B cell (primary cell): ENCODE measurements at regions of chr5 and their contacts with region 1.

Region 1: DNA sequence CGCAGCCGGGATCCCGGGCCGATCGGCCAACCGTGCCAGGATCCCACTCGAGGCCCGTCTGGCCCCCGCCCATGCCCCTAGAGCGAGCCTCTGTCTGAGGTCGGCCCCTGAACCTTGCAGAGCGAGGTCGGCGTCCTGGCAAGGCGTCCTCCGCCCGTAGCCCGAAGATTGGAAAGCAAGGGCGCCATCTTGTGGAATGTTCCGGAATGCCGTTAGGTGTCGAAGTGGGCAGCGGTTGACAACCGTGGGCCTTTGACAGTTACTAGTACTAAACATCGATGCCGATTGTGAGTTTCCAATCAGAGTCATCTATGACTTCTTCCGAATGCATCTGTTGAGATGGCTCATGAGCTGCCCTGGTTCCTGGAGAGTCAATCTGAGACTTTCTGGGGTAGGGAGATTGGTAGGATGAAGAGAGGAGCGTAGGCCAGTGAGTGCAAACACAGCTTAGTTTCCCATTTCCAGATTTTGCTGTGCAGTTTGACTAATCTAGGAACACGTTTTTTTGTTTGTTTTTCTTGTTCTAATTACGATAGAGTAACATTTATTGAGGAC is 923 bp upstream of the PLK2 start:
- DNase-seq: peak; percentile 93
- ATAC-seq: peak; percentile 60
- H3K4me3 ChIP-seq: peak overlapping the region in 4 of 5 experiments; percentile 67 to 88 (median 78)
- H3K4me3 Mint-ChIP-seq: peak overlapping the region; percentile 87
- H3K27ac ChIP-seq: peak overlapping the region; percentile 87 to 93
- H3K27ac Mint-ChIP-seq: peak overlapping the region; percentile 93
- H3K4me1 ChIP-seq: peaks cover 10 to 13% of the 10 kb centered on the region in 2 donors
- H3K4me1 Mint-ChIP-seq: peaks cover 13% of the 10 kb centered on the region
- H3K27me3 ChIP-seq: peaks cover 0 to 7% (median 3%) of the 10 kb centered on the region in 4 experiments
- H3K27me3 Mint-ChIP-seq: peaks cover 3% of the 10 kb centered on the region
- CTCF ChIP-seq: peak; percentile 83

Region 2: GRCh38 chr5:56951946-56952691 is 1508.7 kb before region 1 on chr5 and contains the start of gene MIER3:
- CTCF ChIA-PET with region 1: no interaction called
- POLR2A ChIA-PET with region 1: no interaction called
- intact Hi-C with region 1: loop called (anchors 5 kb)
- DNase-seq: peak; percentile 84
- ATAC-seq: peak; percentile 91
- H3K4me3 ChIP-seq: peak within 1 kb of the TSS; percentile 38 to 77 (median 72)
- H3K4me3 Mint-ChIP-seq: peak within 1 kb of the TSS; percentile 97
- H3K27ac ChIP-seq: peak within 1 kb of the TSS in 1 of 2 donors; percentile 59
- H3K27ac Mint-ChIP-seq: peak within 1 kb of the TSS; percentile 88
- H3K4me1 ChIP-seq: peaks cover 17 to 19% of the 10 kb centered on the region in 2 donors
- H3K4me1 Mint-ChIP-seq: peaks cover 25% of the 10 kb centered on the region
- H3K27me3 ChIP-seq: peaks cover 0 to 5% (median 1%) of the 10 kb centered on the region in 4 experiments
- H3K27me3 Mint-ChIP-seq: peaks cover 11% of the 10 kb centered on the region
- CTCF ChIP-seq: no peak
- total RNA-seq, gene MIER3: 23.2 and 25.9 TPM in 2 replicates

Region 3: GRCh38 chr5:57499262-57500050 is 961.4 kb before region 1 on chr5:
- CTCF ChIA-PET with region 1: interaction called, 19 read pairs
- POLR2A ChIA-PET with region 1: no interaction called
- intact Hi-C with region 1: loop called (anchors 1 kb)
- DNase-seq: peak; percentile 29
- ATAC-seq: peak; percentile 33
- H3K4me3 ChIP-seq: peak overlapping the region in 3 of 5 experiments; percentile 26 to 55 (median 45)
- H3K4me3 Mint-ChIP-seq: peak overlapping the region; percentile 76
- H3K27ac ChIP-seq: no peak overlapping the region
- H3K27ac Mint-ChIP-seq: no peak overlapping the region
- H3K4me1 ChIP-seq: peaks cover 3 to 4% of the 10 kb centered on the region in 2 donors
- H3K4me1 Mint-ChIP-seq: peaks cover 3% of the 10 kb centered on the region
- H3K27me3 ChIP-seq: no peaks in the 10 kb centered on the region
- H3K27me3 Mint-ChIP-seq: peaks cover 26% of the 10 kb centered on the region
- CTCF ChIP-seq: peak; percentile 56

Region 4: DNA sequence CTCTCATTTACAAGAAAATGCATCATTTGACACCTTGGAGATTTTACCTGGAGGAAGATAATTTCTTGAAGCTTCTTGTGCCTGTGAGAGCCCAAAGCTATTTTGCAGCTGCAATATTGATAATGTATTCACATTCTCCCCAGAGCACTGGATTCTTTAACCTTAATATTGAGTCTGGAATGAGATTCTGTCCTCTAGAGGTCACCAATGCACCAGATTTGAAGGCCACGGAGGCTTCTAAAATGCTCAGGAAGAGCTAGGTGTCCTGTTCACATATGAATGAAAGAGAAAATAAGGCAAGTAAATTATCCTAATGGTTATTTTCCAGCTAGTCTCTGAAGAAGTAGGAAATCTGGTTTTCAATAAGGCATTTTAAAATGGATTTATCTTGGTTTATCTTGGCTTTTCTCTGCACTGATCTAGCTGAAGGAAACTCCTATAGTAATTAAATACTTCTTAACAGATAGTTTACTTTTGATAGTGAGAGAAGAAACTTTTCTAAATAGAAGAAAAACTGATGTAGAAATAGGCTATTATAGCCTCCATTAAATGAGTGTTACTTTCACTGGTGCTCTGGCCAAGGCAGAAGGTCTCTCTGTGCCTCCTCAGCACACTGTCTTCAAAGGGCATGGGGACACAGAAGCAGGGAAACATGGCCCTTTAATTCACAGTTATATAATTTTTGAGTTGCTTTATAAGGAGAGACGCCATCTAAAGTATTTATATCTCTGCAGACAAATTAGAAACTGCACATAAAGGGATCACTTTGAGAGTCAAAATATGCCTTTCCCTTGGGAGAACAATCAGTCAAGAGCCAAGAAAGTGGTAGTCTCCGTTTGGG is 681.2 kb before region 1 on chr5:
- CTCF ChIA-PET with region 1: interaction called, 64 read pairs
- POLR2A ChIA-PET with region 1: no interaction called
- intact Hi-C with region 1: loop called (anchors 1 kb)
- DNase-seq: peak; percentile 44
- ATAC-seq: no peak
- H3K4me3 ChIP-seq: no peak overlapping the region
- H3K4me3 Mint-ChIP-seq: no peak overlapping the region
- H3K27ac ChIP-seq: no peak overlapping the region
- H3K27ac Mint-ChIP-seq: no peak overlapping the region
- H3K4me1 ChIP-seq: no peaks in the 10 kb centered on the region
- H3K4me1 Mint-ChIP-seq: no peaks in the 10 kb centered on the region
- H3K27me3 ChIP-seq: no peaks in the 10 kb centered on the region
- H3K27me3 Mint-ChIP-seq: no peaks in the 10 kb centered on the region
- CTCF ChIP-seq: peak; percentile 25

Region 5: GRCh38 chr5:58378613-58379390 is 82.0 kb before region 1 on chr5:
- CTCF ChIA-PET with region 1: no interaction called
- POLR2A ChIA-PET with region 1: no interaction called
- intact Hi-C with region 1: no loop called
- DNase-seq: no peak
- ATAC-seq: no peak
- H3K4me3 ChIP-seq: no peak overlapping the region
- H3K4me3 Mint-ChIP-seq: no peak overlapping the region
- H3K27ac ChIP-seq: no peak overlapping the region
- H3K27ac Mint-ChIP-seq: no peak overlapping the region
- H3K4me1 ChIP-seq: no peaks in the 10 kb centered on the region
- H3K4me1 Mint-ChIP-seq: no peaks in the 10 kb centered on the region
- H3K27me3 ChIP-seq: peaks cover 0 to 5% (median 0%) of the 10 kb centered on the region in 4 experiments
- H3K27me3 Mint-ChIP-seq: peaks cover 4% of the 10 kb centered on the region
- CTCF ChIP-seq: no peak

Region 6: GRCh38 chr5:58491216-58491892 is 30.5 kb after region 1 on chr5 and contains the start of gene GAPT:
- CTCF ChIA-PET with region 1: interaction called, 6 read pairs
- POLR2A ChIA-PET with region 1: interaction called, 3 read pairs
- intact Hi-C with region 1: loop called (anchors 1 kb)
- DNase-seq: peak; percentile 86
- ATAC-seq: peak; percentile 88
- H3K4me3 ChIP-seq: peak within 1 kb of the TSS; percentile 56 to 98 (median 66)
- H3K4me3 Mint-ChIP-seq: peak within 1 kb of the TSS; percentile 86
- H3K27ac ChIP-seq: peak within 1 kb of the TSS; percentile 73 to 90
- H3K27ac Mint-ChIP-seq: peak within 1 kb of the TSS; percentile 92
- H3K4me1 ChIP-seq: peaks cover 30 to 55% of the 10 kb centered on the region in 2 donors
- H3K4me1 Mint-ChIP-seq: peaks cover 60% of the 10 kb centered on the region
- H3K27me3 ChIP-seq: no peaks in the 10 kb centered on the region
- H3K27me3 Mint-ChIP-seq: no peaks in the 10 kb centered on the region
- CTCF ChIP-seq: no peak
- total RNA-seq, gene GAPT: 40.6 and 51.3 TPM in 2 replicates

Region 7: DNA sequence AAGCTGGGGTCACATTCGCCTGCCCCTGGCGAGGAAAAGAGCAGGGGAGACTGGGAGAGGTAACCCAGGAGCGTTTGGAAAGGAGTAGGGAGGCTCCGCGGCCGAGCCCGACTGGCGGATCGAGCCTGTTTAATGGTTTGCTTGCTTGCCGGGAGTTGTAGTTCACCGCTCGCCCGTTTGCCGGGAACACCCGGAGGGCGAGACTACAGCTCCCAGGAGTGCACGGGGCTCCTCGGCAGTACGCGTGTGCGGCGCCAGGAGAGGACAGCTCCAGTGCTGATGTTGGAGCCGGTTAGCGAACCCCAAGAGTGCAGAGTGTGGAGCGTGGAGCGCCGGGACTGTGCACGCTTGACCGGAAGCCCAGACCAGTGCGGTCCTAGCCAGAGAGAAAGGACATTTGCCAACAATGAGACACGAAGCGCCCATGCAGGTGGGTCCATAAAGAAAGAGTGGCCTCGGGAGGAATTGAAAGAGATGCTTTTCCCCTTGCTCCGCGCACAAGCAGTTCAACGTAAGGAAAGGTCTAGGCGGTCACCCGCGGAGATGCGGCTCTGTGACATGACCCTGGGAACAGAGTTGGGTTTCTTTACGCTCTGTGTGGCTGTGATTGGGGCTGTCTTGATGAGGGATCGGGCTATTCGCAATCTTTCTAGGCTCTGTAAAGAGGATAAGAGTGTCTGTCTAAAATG is 122.1 kb after region 1 on chr5 and contains the start of gene RAB3C:
- CTCF ChIA-PET with region 1: interaction called, 12 read pairs
- POLR2A ChIA-PET with region 1: interaction called, 3 read pairs
- intact Hi-C with region 1: loop called (anchors 1 kb)
- DNase-seq: peak; percentile 87
- ATAC-seq: peak; percentile 100
- H3K4me3 ChIP-seq: peak within 1 kb of the TSS; percentile 63 to 97 (median 92)
- H3K4me3 Mint-ChIP-seq: peak within 1 kb of the TSS; percentile 93
- H3K27ac ChIP-seq: no peak within 1 kb of the TSS
- H3K27ac Mint-ChIP-seq: peak within 1 kb of the TSS; percentile 38
- H3K4me1 ChIP-seq: peaks cover 15 to 19% of the 10 kb centered on the region in 2 donors
- H3K4me1 Mint-ChIP-seq: peaks cover 23% of the 10 kb centered on the region
- H3K27me3 ChIP-seq: peaks cover 7 to 37% (median 25%) of the 10 kb centered on the region in 4 experiments
- H3K27me3 Mint-ChIP-seq: peaks cover 36% of the 10 kb centered on the region
- CTCF ChIP-seq: no peak
- total RNA-seq, gene RAB3C: 0.20 and 0.32 TPM in 2 replicates

Region 8: GRCh38 chr5:59126708-59127573 is 666.1 kb after region 1 on chr5:
- CTCF ChIA-PET with region 1: no interaction called
- POLR2A ChIA-PET with region 1: no interaction called
- intact Hi-C with region 1: loop called (anchors 5 kb)
- DNase-seq: no peak
- ATAC-seq: no peak
- H3K4me3 ChIP-seq: peak overlapping the region; percentile 2 to 56 (median 46)
- H3K4me3 Mint-ChIP-seq: no peak overlapping the region
- H3K27ac ChIP-seq: peak overlapping the region; percentile 37 to 62
- H3K27ac Mint-ChIP-seq: no peak overlapping the region
- H3K4me1 ChIP-seq: peaks cover 8 to 10% of the 10 kb centered on the region in 2 donors
- H3K4me1 Mint-ChIP-seq: peaks cover 9% of the 10 kb centered on the region
- H3K27me3 ChIP-seq: no peaks in the 10 kb centered on the region
- H3K27me3 Mint-ChIP-seq: no peaks in the 10 kb centered on the region
- CTCF ChIP-seq: no peak